Mammary epithelial cell (primary cell): ENCODE measurements at regions of chr11 and their contacts with region 1.

Region 1: GRCh38 chr11:8006349-8006977 is 19.3 kb downstream of the EIF3F start:
- DNase-seq: peak; percentile 53
- H3K4me3 ChIP-seq: no peak overlapping the region
- H3K27ac ChIP-seq: no peak overlapping the region
- H3K4me1 ChIP-seq: no peaks in the 10 kb centered on the region
- H3K27me3 ChIP-seq: no peaks in the 10 kb centered on the region
- CTCF ChIP-seq: peak; percentile 93 to 95

Region 2: GRCh38 chr11:7892840-7893254 is 113.6 kb before region 1 on chr11:
- CTCF ChIA-PET with region 1: no interaction called
- dilution Hi-C with region 1: loop called (anchors 5 kb)
- in situ Hi-C with region 1: no loop called
- intact Hi-C with region 1: no loop called
- DNase-seq: peak; percentile 49
- H3K4me3 ChIP-seq: no peak overlapping the region
- H3K27ac ChIP-seq: no peak overlapping the region
- H3K4me1 ChIP-seq: peaks cover 14% of the 10 kb centered on the region
- H3K27me3 ChIP-seq: no peaks in the 10 kb centered on the region
- CTCF ChIP-seq: peak; percentile 68 to 80

Region 3: DNA sequence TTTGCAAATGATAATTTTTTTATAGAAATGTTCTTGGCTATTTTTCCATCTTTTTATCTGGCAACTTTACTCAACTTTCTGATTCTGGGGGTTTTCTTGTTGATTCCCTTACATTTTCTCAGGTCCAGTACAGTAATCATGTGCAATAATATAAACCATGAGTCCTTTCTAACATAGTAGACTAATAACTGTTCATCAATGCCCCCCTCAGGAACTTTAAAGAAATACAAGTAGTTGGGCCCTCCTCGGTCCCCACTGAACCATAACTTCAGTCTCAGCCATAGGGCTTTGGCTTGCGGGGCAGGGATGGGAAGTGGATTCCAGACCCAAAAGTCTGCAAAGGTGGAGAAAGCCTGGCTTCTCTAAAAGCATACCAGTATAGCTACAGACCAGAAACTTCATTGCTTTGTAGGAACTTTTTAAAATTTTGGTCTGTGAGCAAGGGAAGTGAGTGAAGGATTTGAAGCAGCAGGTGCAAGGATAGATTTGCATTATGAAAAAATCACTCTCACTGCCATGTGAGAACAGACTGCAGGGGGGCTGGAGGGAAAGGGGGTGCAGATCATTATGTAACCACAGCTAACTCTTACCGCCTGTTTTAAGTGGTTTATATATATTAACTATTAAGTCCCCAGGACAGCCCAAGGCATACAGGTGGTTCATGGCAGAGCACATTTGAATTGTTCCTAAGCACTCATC is 64.1 kb after region 1 on chr11:
- CTCF ChIA-PET with region 1: no interaction called
- dilution Hi-C with region 1: no loop called
- in situ Hi-C with region 1: no loop called
- intact Hi-C with region 1: loop called (anchors 1 kb)
- DNase-seq: peak; percentile 27
- H3K4me3 ChIP-seq: no peak overlapping the region
- H3K27ac ChIP-seq: no peak overlapping the region
- H3K4me1 ChIP-seq: no peaks in the 10 kb centered on the region
- H3K27me3 ChIP-seq: no peaks in the 10 kb centered on the region
- CTCF ChIP-seq: peak; percentile 26 to 50

Region 4: DNA sequence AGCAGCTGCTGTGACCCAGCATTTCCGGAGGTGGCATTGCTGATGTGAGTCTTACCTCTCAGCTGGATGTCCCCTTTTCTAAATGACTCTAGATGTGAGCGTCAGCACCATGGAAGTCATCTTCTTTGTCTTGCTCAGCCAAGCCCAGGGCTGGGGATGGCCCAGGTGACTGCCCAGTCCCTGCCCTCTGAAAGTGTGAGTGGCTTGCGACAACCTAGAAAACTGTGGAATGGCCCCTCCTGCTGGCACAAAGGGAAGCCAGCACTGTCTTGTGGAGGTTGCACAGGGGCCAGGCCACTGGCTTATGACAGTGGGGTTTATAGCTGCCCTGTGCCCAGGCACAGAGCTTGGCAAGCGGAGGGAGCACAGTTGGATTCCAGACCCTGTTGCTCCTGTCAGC is 80.7 kb after region 1 on chr11:
- CTCF ChIA-PET with region 1: interaction called, 10 read pairs
- dilution Hi-C with region 1: loop called (anchors 5 kb)
- in situ Hi-C with region 1: loop called in 1 of 2 experiments (anchors 10 kb)
- intact Hi-C with region 1: loop called (anchors 1 kb)
- DNase-seq: no peak
- H3K4me3 ChIP-seq: no peak overlapping the region
- H3K27ac ChIP-seq: no peak overlapping the region
- H3K4me1 ChIP-seq: no peaks in the 10 kb centered on the region
- H3K27me3 ChIP-seq: peaks cover 6% of the 10 kb centered on the region
- CTCF ChIP-seq: peak; percentile 11 to 29

Region 5: DNA sequence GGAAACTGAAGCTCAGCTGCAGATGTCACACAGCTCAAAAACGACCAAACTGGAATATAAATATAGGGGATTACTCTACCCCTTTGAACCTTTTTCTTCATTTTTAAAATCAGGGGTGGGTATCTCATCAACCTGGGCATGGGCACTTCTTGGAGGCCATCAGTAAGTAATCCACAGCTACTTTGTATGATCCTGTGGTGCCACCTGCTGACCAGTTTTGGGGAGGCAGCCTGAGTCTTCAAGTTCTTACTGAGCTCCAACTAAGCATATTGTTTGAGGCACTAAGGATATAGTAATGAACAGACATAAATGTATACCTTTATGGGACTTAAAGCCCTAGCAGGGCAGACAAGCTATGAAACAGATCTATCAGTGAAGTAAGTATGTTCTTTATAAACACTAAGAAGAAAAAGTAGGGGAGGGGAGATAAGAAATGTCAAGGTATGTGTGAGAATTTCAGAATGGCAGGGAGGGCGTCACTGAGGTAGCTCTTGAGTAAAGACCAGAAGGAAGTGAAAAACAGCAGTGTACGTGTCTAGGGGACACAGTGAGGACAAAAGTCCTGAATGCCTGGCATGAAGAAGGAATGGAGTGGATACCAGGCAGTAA is 92.9 kb after region 1 on chr11:
- CTCF ChIA-PET with region 1: interaction called, 22 read pairs
- dilution Hi-C with region 1: no loop called
- in situ Hi-C with region 1: loop called in 1 of 2 experiments (anchors 5 kb)
- intact Hi-C with region 1: loop called (anchors 1 kb)
- DNase-seq: peak; percentile 46
- H3K4me3 ChIP-seq: no peak overlapping the region
- H3K27ac ChIP-seq: no peak overlapping the region
- H3K4me1 ChIP-seq: no peaks in the 10 kb centered on the region
- H3K27me3 ChIP-seq: no peaks in the 10 kb centered on the region
- CTCF ChIP-seq: peak; percentile 86 to 88